Mammary epithelial cell (primary cell): ENCODE measurements at regions of chr17 and their contacts with region 1.

Region 1: GRCh38 chr17:29042679-29043538 is at the start of gene PIPOX:
- DNase-seq: no peak
- H3K4me3 ChIP-seq: no peak within 1 kb of the TSS
- H3K27ac ChIP-seq: no peak within 1 kb of the TSS
- H3K4me1 ChIP-seq: peaks cover 35% of the 10 kb centered on the region
- H3K27me3 ChIP-seq: no peaks in the 10 kb centered on the region
- CTCF ChIP-seq: no peak
- total RNA-seq, gene PIPOX: 0.40 to 1.2 TPM

Region 2: DNA sequence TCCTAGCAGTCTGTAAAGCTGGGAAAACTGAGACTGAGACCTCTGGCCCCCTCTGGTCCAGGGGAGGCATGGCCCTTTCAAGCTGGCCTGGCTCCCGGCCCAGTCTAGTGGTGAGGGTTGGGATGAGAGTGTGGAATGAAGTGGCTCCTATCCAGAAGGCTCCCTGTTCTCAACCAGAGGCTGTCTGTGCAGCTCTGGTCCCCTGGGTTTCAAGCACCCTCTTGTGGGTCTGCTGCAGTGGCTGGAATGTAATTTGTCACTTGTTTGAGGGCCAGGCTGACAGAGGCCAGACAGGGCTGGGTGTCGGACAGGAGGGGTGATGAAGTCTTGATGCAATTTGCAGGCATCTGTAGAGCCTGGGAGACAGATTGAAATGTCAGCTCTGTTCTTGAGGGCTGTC is 69.5 kb before region 1 on chr17:
- CTCF ChIA-PET with region 1: no interaction called
- dilution Hi-C with region 1: loop called (anchors 5 kb)
- in situ Hi-C with region 1: no loop called
- intact Hi-C with region 1: no loop called
- DNase-seq: no peak
- H3K4me3 ChIP-seq: no peak overlapping the region
- H3K27ac ChIP-seq: no peak overlapping the region
- H3K4me1 ChIP-seq: no peaks in the 10 kb centered on the region
- H3K27me3 ChIP-seq: peaks cover 4% of the 10 kb centered on the region
- CTCF ChIP-seq: no peak

Region 3: DNA sequence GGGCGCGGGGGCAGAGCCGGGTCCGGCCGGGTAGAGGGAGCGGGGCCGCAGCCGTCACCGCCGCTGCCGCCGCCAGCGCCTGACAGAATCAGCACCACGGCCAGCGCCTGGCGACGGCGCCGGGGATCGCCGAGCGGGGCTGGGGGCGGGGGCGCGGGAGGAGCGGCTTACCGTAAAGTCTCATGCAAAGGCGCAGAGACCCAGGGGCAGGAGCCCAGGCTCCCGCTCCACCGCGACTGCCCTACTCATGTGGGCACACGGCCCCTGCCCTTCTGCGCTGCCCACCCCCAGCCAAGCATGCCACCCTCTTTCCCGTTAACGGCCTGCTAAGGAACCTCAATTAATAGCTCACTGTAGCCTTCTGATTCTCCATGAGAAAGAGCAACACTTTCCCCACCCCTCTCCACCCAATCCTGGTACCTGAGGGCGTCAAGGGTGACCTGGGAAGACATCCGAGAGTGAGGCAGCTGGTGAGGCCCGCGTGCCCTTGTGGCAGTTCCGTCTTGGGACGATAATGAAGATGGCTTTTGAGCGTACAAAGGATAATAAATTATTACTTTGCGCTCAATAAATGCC is 36.9 kb before region 1 on chr17 and contains the start of gene SEZ6:
- CTCF ChIA-PET with region 1: no interaction called
- dilution Hi-C with region 1: loop called (anchors 5 kb)
- in situ Hi-C with region 1: no loop called
- intact Hi-C with region 1: no loop called
- DNase-seq: peak; percentile 47
- H3K4me3 ChIP-seq: no peak within 1 kb of the TSS
- H3K27ac ChIP-seq: no peak within 1 kb of the TSS
- H3K4me1 ChIP-seq: no peaks in the 10 kb centered on the region
- H3K27me3 ChIP-seq: peaks cover 13% of the 10 kb centered on the region
- CTCF ChIP-seq: no peak
- total RNA-seq, gene SEZ6: not detected

Region 4: DNA sequence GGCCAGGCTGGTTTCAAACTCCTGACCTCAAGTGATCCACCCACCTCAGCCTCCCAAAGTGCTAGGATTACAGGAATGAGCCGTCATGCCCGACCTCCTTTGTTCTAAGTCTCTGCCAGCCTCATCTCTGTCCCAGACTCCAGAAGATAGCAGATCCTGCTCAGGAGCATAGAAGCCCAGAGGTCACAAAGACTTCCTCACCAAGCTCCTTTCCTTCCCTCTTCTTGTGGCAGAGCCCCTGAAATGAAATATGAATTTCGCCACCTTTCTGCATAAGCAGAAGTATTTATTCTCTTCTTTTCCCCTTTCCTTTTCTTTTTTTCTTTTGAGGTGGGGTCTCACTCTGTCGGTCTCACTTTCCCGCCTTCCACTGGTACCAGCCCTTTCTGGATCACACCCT is 11.4 kb before region 1 on chr17:
- CTCF ChIA-PET with region 1: no interaction called
- dilution Hi-C with region 1: no loop called
- in situ Hi-C with region 1: no loop called
- intact Hi-C with region 1: no loop called
- DNase-seq: no peak
- H3K4me3 ChIP-seq: no peak overlapping the region
- H3K27ac ChIP-seq: no peak overlapping the region
- H3K4me1 ChIP-seq: no peaks in the 10 kb centered on the region
- H3K27me3 ChIP-seq: no peaks in the 10 kb centered on the region
- CTCF ChIP-seq: no peak

Region 5: GRCh38 chr17:29059281-29059680 is 16.4 kb after region 1 on chr17:
- CTCF ChIA-PET with region 1: no interaction called
- dilution Hi-C with region 1: no loop called
- in situ Hi-C with region 1: no loop called
- intact Hi-C with region 1: loop called (anchors 1 kb)
- DNase-seq: peak; percentile 51
- H3K4me3 ChIP-seq: no peak overlapping the region
- H3K27ac ChIP-seq: no peak overlapping the region
- H3K4me1 ChIP-seq: no peaks in the 10 kb centered on the region
- H3K27me3 ChIP-seq: no peaks in the 10 kb centered on the region
- CTCF ChIP-seq: no peak

Region 6: GRCh38 chr17:29078183-29079045 is 35.5 kb after region 1 on chr17:
- CTCF ChIA-PET with region 1: no interaction called
- dilution Hi-C with region 1: loop called (anchors 5 kb)
- in situ Hi-C with region 1: no loop called
- intact Hi-C with region 1: no loop called
- DNase-seq: no peak
- H3K4me3 ChIP-seq: no peak overlapping the region
- H3K27ac ChIP-seq: no peak overlapping the region
- H3K4me1 ChIP-seq: no peaks in the 10 kb centered on the region
- H3K27me3 ChIP-seq: no peaks in the 10 kb centered on the region
- CTCF ChIP-seq: no peak

Region 7: GRCh38 chr17:29341751-29342150 is 298.8 kb after region 1 on chr17:
- CTCF ChIA-PET with region 1: no interaction called
- dilution Hi-C with region 1: no loop called
- in situ Hi-C with region 1: no loop called
- intact Hi-C with region 1: no loop called
- DNase-seq: peak; percentile 57
- H3K4me3 ChIP-seq: no peak overlapping the region
- H3K27ac ChIP-seq: no peak overlapping the region
- H3K4me1 ChIP-seq: no peaks in the 10 kb centered on the region
- H3K27me3 ChIP-seq: no peaks in the 10 kb centered on the region
- CTCF ChIP-seq: no peak

Region 8: GRCh38 chr17:29524460-29525091 is 481.7 kb after region 1 on chr17:
- CTCF ChIA-PET with region 1: no interaction called
- dilution Hi-C with region 1: no loop called
- in situ Hi-C with region 1: no loop called
- intact Hi-C with region 1: no loop called
- DNase-seq: no peak
- H3K4me3 ChIP-seq: no peak overlapping the region
- H3K27ac ChIP-seq: no peak overlapping the region
- H3K4me1 ChIP-seq: no peaks in the 10 kb centered on the region
- H3K27me3 ChIP-seq: no peaks in the 10 kb centered on the region
- CTCF ChIP-seq: no peak